Mammary epithelial cell (primary cell): ENCODE measurements at regions of chr5 and their contacts with region 1.

Region 1: GRCh38 chr5:128201065-128201926 is 117.7 kb downstream of the SLC12A2 start:
- DNase-seq: peak; percentile 64
- H3K4me3 ChIP-seq: no peak overlapping the region
- H3K27ac ChIP-seq: no peak overlapping the region
- H3K4me1 ChIP-seq: peaks cover 10% of the 10 kb centered on the region
- H3K27me3 ChIP-seq: no peaks in the 10 kb centered on the region
- CTCF ChIP-seq: peak; percentile 62 to 87

Region 2: GRCh38 chr5:127647361-127647958 is 553.8 kb before region 1 on chr5:
- CTCF ChIA-PET with region 1: no interaction called
- dilution Hi-C with region 1: no loop called
- in situ Hi-C with region 1: no loop called
- intact Hi-C with region 1: no loop called
- DNase-seq: peak; percentile 44
- H3K4me3 ChIP-seq: no peak overlapping the region
- H3K27ac ChIP-seq: no peak overlapping the region
- H3K4me1 ChIP-seq: peaks cover 35% of the 10 kb centered on the region
- H3K27me3 ChIP-seq: no peaks in the 10 kb centered on the region
- CTCF ChIP-seq: no peak

Region 3: DNA sequence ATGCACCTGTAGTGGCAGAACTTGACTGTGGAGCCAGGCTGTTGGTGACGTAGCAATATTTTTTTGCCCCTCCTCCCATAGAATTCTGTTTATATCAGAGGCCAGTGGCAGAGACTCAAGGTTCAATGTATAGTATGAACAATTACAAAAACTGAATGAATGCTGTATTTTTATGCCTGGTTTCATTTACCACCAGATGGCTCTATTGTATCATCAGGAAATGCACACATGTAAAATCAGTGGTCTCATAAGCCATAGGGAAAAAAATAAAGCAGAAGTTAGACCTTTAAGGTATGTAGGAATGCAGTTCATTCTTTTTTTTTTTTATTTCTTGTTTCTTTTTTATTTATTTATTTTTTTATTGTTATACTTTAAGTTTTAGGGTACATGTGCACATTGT is 454.5 kb before region 1 on chr5:
- CTCF ChIA-PET with region 1: no interaction called
- dilution Hi-C with region 1: no loop called
- in situ Hi-C with region 1: no loop called
- intact Hi-C with region 1: loop called (anchors 2 kb)
- DNase-seq: no peak
- H3K4me3 ChIP-seq: no peak overlapping the region
- H3K27ac ChIP-seq: no peak overlapping the region
- H3K4me1 ChIP-seq: no peaks in the 10 kb centered on the region
- H3K27me3 ChIP-seq: peaks cover 3% of the 10 kb centered on the region
- CTCF ChIP-seq: peak; percentile 55 to 59

Region 4: GRCh38 chr5:127766676-127767340 is 434.5 kb before region 1 on chr5:
- CTCF ChIA-PET with region 1: no interaction called
- dilution Hi-C with region 1: no loop called
- in situ Hi-C with region 1: loop called in 1 of 2 experiments (anchors 10 kb)
- intact Hi-C with region 1: no loop called
- DNase-seq: no peak
- H3K4me3 ChIP-seq: no peak overlapping the region
- H3K27ac ChIP-seq: no peak overlapping the region
- H3K4me1 ChIP-seq: no peaks in the 10 kb centered on the region
- H3K27me3 ChIP-seq: peaks cover 7% of the 10 kb centered on the region
- CTCF ChIP-seq: no peak

Region 5: GRCh38 chr5:127969002-127969401 is 232.3 kb before region 1 on chr5:
- CTCF ChIA-PET with region 1: no interaction called
- dilution Hi-C with region 1: no loop called
- in situ Hi-C with region 1: no loop called
- intact Hi-C with region 1: loop called (anchors 5 kb)
- DNase-seq: peak; percentile 53
- H3K4me3 ChIP-seq: no peak overlapping the region
- H3K27ac ChIP-seq: peak overlapping the region; percentile 47
- H3K4me1 ChIP-seq: peaks cover 37% of the 10 kb centered on the region
- H3K27me3 ChIP-seq: no peaks in the 10 kb centered on the region
- CTCF ChIP-seq: no peak

Region 6: GRCh38 chr5:128409166-128409800 is 208.0 kb after region 1 on chr5:
- CTCF ChIA-PET with region 1: no interaction called
- dilution Hi-C with region 1: no loop called
- in situ Hi-C with region 1: no loop called
- intact Hi-C with region 1: no loop called
- DNase-seq: peak; percentile 6
- H3K4me3 ChIP-seq: no peak overlapping the region
- H3K27ac ChIP-seq: peak overlapping the region; percentile 40
- H3K4me1 ChIP-seq: peaks cover 12% of the 10 kb centered on the region
- H3K27me3 ChIP-seq: no peaks in the 10 kb centered on the region
- CTCF ChIP-seq: no peak

Region 7: DNA sequence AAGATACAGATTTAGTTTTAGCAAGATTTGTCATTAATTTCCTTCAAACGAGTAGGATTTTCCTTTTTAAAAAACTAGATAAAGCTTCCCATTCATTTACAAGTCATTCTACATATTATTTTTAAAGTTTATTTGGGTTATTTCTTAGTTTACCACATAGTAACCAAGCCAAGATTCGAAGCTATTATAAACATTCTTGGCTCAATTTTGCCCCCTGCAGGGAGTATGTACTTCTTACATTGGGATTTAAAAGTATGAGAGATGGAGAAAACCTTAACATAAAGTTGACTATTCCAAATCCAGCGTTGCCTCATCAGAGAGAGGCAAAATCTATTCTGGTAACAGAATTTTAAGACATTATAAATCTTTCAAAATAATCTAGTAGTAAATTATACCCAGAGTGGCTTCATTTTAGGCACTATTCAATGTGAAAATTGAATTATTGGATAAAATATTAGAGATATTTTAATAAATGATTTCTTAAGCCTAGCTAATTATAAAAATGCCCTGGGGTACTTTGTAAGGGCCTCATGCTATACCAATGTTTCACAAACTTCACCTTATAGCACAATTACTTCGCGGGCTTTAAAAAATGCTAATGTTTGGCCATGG is 297.7 kb after region 1 on chr5:
- CTCF ChIA-PET with region 1: no interaction called
- dilution Hi-C with region 1: no loop called
- in situ Hi-C with region 1: loop called in 1 of 2 experiments (anchors 10 kb)
- intact Hi-C with region 1: no loop called
- DNase-seq: peak; percentile 20
- H3K4me3 ChIP-seq: no peak overlapping the region
- H3K27ac ChIP-seq: no peak overlapping the region
- H3K4me1 ChIP-seq: no peaks in the 10 kb centered on the region
- H3K27me3 ChIP-seq: no peaks in the 10 kb centered on the region
- CTCF ChIP-seq: peak; percentile 50 to 61

Region 8: GRCh38 chr5:128844354-128844923 is 643.1 kb after region 1 on chr5:
- CTCF ChIA-PET with region 1: no interaction called
- dilution Hi-C with region 1: loop called (anchors 25 kb)
- in situ Hi-C with region 1: loop called in 1 of 2 experiments (anchors 25 kb)
- intact Hi-C with region 1: no loop called
- DNase-seq: no peak
- H3K4me3 ChIP-seq: no peak overlapping the region
- H3K27ac ChIP-seq: no peak overlapping the region
- H3K4me1 ChIP-seq: no peaks in the 10 kb centered on the region
- H3K27me3 ChIP-seq: peaks cover 2% of the 10 kb centered on the region
- CTCF ChIP-seq: peak; percentile 30 to 35